ENCODE measurements at regions of chr12 and their contacts with region 1.

Region 1: DNA sequence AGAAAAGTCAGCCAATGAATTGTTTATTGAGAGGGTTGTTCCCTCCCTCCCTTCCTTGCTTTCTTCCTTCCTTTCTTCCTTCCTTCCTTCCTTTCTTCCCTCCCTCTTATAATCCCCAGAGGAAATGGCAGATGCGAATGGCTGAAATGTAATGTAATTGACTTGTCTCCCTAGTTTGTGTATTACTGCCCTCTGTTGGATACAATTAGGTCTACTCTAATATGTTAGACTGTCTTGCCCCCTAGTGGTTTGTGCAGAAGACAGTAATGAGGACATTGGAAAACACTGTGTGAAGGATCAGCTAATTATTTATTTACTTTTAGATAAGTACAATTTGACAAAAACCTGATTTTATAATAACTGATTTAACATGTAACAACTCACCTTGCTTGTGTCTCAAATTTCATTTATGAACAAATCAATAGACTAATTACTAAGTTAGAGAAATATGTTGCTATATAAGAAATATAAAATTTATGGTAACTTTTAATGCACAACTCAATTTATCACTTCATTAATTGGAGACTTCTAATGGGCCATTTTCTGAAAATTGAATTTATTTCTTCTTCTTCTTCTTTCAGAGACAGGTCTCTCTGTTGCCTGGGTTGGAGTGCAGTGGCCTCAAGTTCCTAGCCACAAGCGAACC is 229.8 kb upstream of the LRIG3 start:
- DNase-seq: no peak

Region 2: GRCh38 chr12:58346032-58346632 is 804.0 kb before region 1 on chr12:
- intact Hi-C with region 1: loop called (anchors 5 kb)
- DNase-seq: no peak

Region 3: GRCh38 chr12:58540480-58541299 is 609.4 kb before region 1 on chr12:
- intact Hi-C with region 1: loop called (anchors 10 kb)
- DNase-seq: peak; percentile 76

Region 4: DNA sequence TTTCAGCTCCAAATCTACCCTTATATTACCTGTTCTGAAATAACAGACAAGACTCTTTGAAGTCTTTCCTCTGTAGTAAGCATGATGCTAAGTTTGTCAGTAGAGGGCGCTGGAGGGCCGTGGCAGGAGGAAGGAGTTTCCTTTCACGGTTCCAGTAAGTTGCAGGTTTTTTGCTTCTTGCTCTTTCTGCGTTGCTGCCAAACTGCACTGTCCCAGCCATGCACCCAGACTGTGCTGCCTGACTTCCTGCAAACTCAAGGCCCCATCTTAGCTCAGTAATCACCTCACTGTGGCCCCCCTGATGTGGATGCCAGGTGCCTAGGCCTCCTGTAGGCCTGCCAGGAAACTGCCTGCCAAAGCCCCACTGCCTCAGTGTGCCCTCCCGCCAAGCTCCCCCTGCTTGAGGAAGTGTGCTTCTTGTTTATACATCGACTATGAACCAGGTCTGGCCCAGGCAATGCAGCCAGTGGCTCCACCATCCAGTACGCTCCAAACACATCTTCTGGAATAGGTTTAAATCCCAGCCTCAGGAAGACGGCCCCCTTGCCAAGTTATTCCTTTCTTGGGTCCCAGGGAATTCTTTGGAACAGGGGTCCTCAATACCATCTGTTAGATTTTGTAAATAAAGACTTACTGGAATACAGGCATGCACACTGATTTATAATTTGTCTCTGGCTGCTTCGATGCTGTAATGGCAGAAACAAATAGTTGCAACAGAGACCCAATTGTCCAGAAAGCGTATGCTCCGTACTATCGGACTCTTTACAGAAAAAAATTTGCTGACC is 36.1 kb before region 1 on chr12:
- intact Hi-C with region 1: loop called (anchors 2 kb)
- DNase-seq: no peak